ENCODE measurements at regions of chr10 and their contacts with region 1.

Region 1: DNA sequence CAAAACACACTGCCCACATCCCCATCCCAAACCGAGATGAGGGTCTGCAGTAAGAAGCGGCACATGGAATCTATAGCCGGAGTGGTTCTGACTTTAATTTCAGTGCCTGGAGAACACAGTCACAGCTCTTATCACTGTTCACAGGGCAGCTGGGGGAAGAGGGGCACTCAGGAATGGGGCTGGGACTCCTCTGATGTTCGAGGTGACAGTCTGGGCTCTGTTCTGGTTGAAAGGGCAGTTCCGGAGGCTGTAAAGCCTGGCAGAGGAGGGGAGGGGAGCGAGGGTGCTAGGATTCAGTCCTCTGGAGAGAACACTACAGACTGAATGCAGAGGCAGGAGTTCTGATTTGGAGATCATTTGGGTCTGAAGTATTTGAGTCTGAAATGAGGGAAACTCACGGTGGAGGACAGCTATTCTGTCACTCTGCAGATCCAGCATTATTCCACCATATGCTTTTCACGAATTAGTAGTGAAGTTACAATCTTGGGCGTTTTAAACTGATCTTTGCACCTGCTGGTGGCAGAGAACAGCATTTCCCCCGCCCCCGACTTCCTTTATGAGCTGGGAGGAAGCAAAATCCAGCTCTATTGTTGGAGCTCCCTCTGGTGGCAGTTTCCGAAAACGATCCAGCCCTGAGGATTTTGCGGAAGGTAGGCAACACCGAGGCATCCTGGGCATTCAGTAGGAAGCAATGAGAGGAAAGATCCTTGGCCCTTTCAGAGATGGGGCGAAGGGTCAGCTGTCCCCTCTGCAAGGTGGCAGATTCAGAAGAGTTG is 22.7 kb upstream of the KCNK18 start:
- DNase-seq: peak; percentile 93
- H3K27ac ChIP-seq: no peak overlapping the region
- CTCF ChIP-seq: peak; percentile 90

Region 2: GRCh38 chr10:117134083-117135025 is 40.3 kb before region 1 on chr10:
- CTCF ChIA-PET with region 1: interaction called, 10 read pairs
- POLR2A ChIA-PET with region 1: no interaction called
- DNase-seq: no peak
- H3K27ac ChIP-seq: no peak overlapping the region
- CTCF ChIP-seq: no peak

Region 3: GRCh38 chr10:117237401-117237991 is 62.9 kb after region 1 on chr10:
- CTCF ChIA-PET with region 1: no interaction called
- POLR2A ChIA-PET with region 1: no interaction called
- DNase-seq: no peak
- H3K27ac ChIP-seq: no peak overlapping the region
- CTCF ChIP-seq: no peak

Region 4: GRCh38 chr10:117294039-117294645 is 119.5 kb after region 1 on chr10:
- CTCF ChIA-PET with region 1: no interaction called
- POLR2A ChIA-PET with region 1: no interaction called
- DNase-seq: no peak
- H3K27ac ChIP-seq: no peak overlapping the region
- CTCF ChIP-seq: no peak